Right cardiac atrium (tissue), 5 donors: ENCODE measurements at regions of chr12 and their contacts with region 1.

Region 1: DNA sequence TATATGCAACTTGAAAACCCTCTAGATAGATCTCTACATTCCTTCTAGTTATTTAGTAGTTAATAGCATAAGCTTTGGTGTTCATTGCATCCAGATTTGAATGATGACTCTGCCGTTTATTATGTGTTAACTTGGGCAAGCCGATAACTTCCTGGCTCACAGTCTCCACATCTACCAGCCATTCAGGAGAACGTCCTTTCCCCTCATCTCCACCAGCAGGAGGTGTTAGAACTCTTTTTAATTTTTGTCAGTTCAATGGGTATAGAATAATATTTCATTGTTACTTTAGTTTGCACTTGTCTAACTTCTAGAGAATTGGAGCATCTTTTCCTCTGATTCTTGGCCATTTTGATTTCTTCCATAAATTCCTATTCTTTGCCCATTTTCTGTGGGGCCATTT is 30.0 kb upstream of the WSCD2 start:
- DNase-seq: no peak
- ATAC-seq: no peak
- H3K4me3 ChIP-seq: no peak overlapping the region
- H3K27ac ChIP-seq: no peak overlapping the region
- H3K4me1 ChIP-seq: no peaks in the 10 kb centered on the region
- H3K27me3 ChIP-seq: no peaks in the 10 kb centered on the region

Region 2: GRCh38 chr12:107843351-107844311 is 255.4 kb before region 1 on chr12:
- intact Hi-C with region 1: no loop called
- DNase-seq: peak in 2 of 3 donors; percentile 47 to 49
- ATAC-seq: peak; percentile 36 to 42
- H3K4me3 ChIP-seq: peak overlapping the region; percentile 19
- H3K27ac ChIP-seq: no peak overlapping the region
- H3K4me1 ChIP-seq: no peaks in the 10 kb centered on the region
- H3K27me3 ChIP-seq: no peaks in the 10 kb centered on the region

Region 3: DNA sequence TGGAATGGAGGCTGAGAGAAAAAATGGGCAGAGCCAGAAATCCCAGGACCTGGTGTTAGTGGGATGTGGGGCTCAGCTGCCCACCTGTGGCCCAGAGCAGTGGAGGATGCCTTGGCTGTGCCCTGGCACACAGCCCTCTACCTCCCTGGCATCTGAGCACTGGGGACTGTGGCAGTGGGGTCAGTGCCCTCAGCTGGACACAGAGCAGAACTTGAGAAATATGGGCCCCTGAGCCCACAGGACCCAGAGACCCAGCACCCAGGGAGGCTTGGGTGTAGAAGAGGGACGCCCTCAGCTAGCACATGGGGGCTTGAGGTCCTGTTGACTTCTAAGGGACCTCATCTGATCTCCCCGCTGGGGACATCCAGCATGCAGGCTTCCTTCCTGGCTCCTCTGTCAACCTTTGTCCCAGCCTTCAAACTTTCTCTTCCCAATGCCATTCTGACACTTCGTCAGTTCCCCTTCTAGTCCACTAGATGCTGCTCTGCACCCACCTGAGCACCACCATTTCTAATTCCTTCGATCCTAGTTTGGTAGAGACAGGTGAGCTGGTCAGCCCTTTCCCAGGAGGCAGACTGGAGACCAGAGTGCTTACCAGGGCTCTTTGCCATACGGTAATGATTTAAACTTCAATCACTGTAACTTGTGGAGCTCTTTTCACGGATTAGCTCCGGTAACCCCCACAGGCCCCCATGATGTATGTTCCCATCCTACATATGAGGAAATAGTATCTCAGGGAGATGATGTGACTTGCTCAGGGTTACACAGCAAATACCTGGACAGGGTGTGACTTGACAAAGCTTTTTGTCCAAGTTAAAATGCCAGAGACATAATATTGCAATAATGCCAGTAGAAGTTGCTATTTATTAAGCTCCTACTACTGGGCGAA is 180.9 kb before region 1 on chr12:
- intact Hi-C with region 1: no loop called
- DNase-seq: no peak
- ATAC-seq: peak in 1 of 2 donors; percentile 22
- H3K4me3 ChIP-seq: no peak overlapping the region
- H3K27ac ChIP-seq: no peak overlapping the region
- H3K4me1 ChIP-seq: no peaks in the 10 kb centered on the region
- H3K27me3 ChIP-seq: no peaks in the 10 kb centered on the region

Region 4: DNA sequence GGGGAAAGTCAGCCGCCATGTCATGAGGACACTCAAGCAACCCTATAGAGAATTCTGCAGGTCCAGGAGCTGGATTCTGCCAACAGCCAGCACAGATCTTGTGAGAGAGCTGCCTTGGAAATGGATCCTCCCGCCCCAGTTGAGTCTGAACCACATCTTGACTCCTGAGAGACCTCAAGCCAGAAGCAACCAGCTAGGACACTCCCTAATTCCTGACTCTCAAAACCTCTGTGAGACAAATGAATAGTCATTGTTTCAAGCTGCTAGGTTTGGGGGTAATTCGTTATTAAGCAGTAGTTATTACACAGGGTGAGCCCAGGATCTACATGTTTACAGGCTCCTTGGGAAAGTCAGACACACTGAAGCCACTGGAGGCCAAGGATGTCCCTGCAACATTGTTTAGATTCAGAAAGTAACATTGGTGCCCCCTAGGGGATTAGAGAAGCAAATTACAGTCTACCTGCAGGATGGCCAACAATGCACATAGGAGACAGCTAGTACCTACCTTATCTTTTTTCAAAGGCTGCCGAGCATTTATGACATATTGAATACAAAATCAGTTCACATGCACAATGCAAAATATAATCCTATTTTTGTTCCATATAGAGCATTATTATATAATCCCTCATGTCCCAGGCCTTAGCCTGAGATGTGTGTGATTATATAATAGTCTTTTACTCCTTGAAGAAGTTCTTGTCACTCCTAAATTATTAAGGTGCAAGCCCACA is 358.1 kb after region 1 on chr12:
- intact Hi-C with region 1: loop called in 1 of 4 experiments (anchors 10 kb)
- DNase-seq: no peak
- ATAC-seq: peak; percentile 41 to 80
- H3K4me3 ChIP-seq: no peak overlapping the region
- H3K27ac ChIP-seq: no peak overlapping the region
- H3K4me1 ChIP-seq: no peaks in the 10 kb centered on the region
- H3K27me3 ChIP-seq: peaks cover 3% of the 10 kb centered on the region